ENCODE measurements at regions of chr3 and their contacts with region 1.

Region 1: GRCh38 chr3:94062431-94063404 is at the starts of genes DHFR2 and NSUN3:
- DNase-seq: peak; percentile 70 to 93 (median 83)

Region 2: GRCh38 chr3:94004301-94004910 is 58.3 kb before region 1 on chr3:
- intact Hi-C with region 1: loop called (anchors 10 kb)
- DNase-seq: peak in 3 of 42 donors; percentile 12 to 45 (median 16)

Region 3: DNA sequence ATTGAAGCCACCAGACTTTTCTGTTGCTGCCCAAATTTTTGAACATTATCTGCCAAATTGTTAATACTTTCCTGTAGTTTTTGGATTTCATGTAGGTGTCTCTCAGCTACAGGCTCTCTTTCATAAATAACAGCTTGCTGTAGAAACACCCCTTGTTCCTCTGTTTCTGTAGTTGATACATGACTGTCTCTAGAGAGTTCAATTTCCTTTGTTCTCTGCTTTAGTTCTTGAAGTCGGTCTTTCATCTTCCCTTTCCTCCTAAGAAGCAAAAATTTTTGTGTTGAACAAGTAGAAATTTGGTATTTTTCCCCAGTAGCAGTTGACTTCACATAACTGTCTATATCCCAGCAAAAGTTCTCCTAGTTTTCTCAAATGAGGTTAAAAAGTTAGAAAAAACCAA is 47.7 kb before region 1 on chr3:
- intact Hi-C with region 1: no loop called
- DNase-seq: no peak

Region 4: GRCh38 chr3:94117729-94118128 is 55.0 kb after region 1 on chr3:
- intact Hi-C with region 1: no loop called
- DNase-seq: no peak